ENCODE measurements at regions of chr20 and their contacts with region 1.

Region 1: DNA sequence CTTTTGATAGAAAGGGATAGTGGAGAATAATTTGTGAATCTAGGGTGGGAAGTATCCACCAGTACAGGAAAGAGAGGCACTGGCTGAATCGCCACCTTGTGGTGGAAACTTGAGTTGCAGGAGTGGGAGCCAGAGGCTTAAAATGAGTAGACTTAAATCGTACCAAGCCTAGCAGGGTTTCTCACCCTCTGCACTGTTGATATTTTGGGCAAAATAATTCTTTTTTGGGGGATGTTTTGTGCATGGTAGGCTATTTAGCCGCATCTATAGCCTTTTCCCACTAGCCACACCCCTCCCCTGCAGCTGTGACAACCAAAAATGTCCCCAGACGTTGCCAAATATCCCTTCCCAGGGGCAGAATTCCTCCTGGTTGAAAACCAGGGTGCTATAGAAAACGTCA is 119.1 kb downstream of the DHX35 start:
- DNase-seq: peak; percentile 90
- H3K4me3 Mint-ChIP-seq: no peak overlapping the region
- H3K27ac Mint-ChIP-seq: no peak overlapping the region
- H3K4me1 Mint-ChIP-seq: no peaks in the 10 kb centered on the region
- H3K27me3 Mint-ChIP-seq: peaks cover 18% of the 10 kb centered on the region

Region 2: GRCh38 chr20:39070484-39071231 is 10.6 kb before region 1 on chr20:
- CTCF ChIA-PET with region 1: interaction called, 16 read pairs
- intact Hi-C with region 1: no loop called
- DNase-seq: no peak
- H3K4me3 Mint-ChIP-seq: no peak overlapping the region
- H3K27ac Mint-ChIP-seq: no peak overlapping the region
- H3K4me1 Mint-ChIP-seq: no peaks in the 10 kb centered on the region
- H3K27me3 Mint-ChIP-seq: peaks cover 8% of the 10 kb centered on the region

Measured in activated naive CD4-positive, alpha-beta T cell treated with anti-CD3 and anti-CD28 coated beads for 36 hours (primary cell).